Right ventricle myocardium superior (tissue), 1 donor: ENCODE measurements at regions of chr9 and their contacts with region 1.

Region 1: DNA sequence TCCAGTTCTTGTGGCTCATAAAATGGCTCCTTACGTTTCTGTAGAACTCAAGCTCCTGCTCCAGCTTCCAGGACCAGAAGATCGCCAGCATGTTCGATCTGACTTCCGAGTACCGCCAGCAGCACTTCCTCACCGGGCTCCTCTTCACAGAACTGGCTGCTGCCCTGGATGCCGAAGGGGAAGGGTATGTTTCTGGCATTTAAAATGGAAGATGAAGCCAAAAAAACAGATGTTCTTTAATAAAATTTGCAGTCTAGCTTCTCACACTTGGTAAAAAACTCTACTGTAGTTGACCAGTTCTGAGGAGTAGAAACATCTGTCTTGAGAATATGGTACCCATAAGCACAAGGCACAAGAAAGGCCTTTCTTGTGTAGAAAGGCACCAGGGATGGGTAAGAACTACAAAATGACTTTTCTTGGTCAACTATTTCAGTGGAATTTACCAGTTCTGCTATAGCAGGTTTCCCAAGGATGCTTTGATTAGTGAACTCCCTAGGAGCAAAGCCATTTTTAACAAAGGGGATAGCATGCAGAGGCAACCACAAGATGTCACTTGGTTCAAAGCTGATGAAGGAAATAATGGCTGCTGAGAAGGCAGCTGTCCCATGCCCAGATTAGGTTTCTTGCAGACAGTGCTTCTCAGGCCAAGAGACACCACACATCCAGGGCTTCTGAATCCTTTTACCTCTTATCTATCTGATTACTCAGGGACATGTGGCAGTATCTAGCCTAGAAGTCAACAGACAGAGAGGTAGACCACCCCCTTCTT is 192.4 kb downstream of the DOCK8 start:
- DNase-seq: no peak
- ATAC-seq: peak; percentile 93

Region 2: DNA sequence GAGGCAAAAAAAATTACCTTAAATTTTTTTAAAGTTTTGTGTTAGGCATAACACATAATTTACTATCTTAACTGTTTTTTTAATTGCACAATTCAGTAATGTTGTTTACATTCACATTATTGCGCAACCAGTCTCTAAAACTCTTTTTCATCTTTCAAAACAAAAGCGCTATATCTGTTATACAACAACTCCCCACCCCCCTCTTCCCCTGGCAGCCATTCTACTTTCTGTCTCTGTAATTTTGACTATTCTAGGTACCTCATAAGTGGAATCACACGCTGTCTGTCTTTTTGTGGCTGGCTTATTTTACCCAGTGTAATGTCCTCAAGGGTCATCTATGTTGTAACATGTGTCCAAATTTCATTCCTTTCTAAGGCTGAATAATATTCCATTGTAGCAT is 192.9 kb after region 1 on chr9:
- intact Hi-C with region 1: loop called (anchors 5 kb)
- DNase-seq: no peak
- ATAC-seq: peak; percentile 58

Region 3: DNA sequence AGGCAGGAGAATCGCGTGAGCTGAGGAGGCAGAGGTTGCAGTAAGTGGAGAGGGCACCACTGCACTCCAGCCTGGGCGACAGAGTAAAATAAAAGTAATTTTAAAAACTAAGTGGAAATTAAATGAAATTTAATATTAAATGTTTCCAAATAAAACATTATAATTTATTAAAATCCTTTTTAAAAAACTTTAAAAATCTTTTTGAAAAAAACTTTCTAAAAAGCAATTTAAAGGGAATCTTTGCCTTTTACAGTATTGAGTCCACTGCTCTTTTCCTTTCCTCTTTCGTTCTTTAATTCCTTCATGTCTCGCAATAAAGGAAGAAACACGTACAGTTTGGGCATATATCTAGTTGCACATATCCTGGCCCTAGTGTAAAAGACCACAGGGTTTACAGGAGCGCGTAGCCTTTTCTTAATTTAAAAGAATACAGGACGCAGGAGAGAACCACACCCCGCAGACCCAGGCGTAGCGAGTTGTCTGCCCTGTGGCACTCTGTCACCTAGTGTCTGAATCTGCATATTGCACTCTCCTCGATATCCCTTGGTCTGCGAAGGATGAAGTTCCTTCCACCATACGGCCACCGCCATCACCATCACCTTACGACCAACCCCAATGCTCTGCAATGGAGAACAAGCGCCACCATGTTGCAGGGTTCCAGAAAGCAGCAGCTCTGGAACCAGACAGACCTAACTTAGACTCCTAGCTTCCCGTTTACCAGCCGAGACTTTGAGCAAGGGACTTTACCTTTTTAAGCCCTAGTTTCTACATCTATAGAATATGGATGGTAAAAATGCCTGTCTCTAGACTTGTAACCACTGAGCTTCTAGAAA is 356.8 kb after region 1 on chr9:
- intact Hi-C with region 1: loop called (anchors 5 kb)
- DNase-seq: peak; percentile 78
- ATAC-seq: peak; percentile 97

Region 4: GRCh38 chr9:1298027-1298426 is 891.0 kb after region 1 on chr9:
- intact Hi-C with region 1: no loop called
- DNase-seq: no peak
- ATAC-seq: no peak